CD4-positive, alpha-beta T cell (primary cell): ENCODE measurements at regions of chr15 and their contacts with region 1.

Region 1: GRCh38 chr15:64989416-64990167 is at the start of gene SPG21:
- DNase-seq: peak; percentile 71 to 96 (median 87)
- ATAC-seq: peak; percentile 88
- H3K4me3 ChIP-seq: peak within 1 kb of the TSS; percentile 97
- H3K4me3 Mint-ChIP-seq: peak within 1 kb of the TSS; percentile 91
- H3K27ac ChIP-seq: peak within 1 kb of the TSS; percentile 63 to 66
- H3K27ac Mint-ChIP-seq: peak within 1 kb of the TSS; percentile 87
- H3K4me1 ChIP-seq: peaks cover 29% of the 10 kb centered on the region
- H3K4me1 Mint-ChIP-seq: peaks cover 53% of the 10 kb centered on the region
- H3K27me3 ChIP-seq: no peaks in the 10 kb centered on the region
- H3K27me3 Mint-ChIP-seq: no peaks in the 10 kb centered on the region
- CTCF ChIP-seq: no peak
- total RNA-seq, gene SPG21: 29.4 to 32.7 TPM

Region 2: DNA sequence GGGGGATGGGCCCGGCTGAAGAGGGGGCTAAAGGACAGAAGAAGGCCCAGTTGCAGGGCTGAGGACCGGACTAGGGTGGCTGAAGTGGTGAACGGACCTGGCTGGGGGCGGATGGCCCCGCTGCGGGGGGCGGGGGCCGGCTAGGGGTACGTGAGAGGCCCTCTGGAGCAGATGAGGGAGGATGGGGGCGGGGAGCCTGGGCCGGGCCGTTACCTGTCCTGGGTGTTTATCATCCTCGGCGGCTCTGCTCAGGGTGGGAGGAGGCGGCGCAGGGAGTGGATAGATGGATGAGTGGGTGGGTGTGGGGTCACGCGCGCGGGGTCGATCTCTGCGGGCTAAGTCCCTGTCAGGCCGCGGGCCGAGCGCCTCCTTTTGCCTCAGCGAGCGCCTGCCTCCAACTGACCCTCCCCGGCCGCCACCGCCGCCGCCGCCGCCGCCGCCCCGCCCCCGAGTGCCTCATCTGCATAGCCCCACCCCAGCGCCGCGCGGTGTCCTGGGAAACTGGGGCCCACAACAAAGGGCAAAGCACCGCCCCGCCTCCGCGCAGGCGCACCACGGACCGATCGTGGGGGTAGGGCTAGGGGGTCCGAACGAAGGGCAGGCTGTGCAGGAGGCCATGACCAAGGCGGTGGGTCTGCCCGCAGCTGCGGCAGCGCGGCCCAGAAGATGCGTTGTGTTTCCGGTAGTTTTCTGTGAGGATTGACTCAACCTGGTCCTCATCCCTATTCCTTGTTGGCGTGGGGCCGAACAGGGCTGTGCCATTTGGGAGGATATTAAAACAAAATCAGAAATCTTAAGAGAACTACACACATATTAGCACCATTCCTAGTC is 286.6 kb before region 1 on chr15:
- CTCF ChIA-PET with region 1: no interaction called
- POLR2A ChIA-PET with region 1: no interaction called
- intact Hi-C with region 1: no loop called
- DNase-seq: peak; percentile 91 to 98 (median 94)
- ATAC-seq: peak; percentile 96
- H3K4me3 ChIP-seq: peak overlapping the region; percentile 91
- H3K4me3 Mint-ChIP-seq: peak overlapping the region; percentile 85
- H3K27ac ChIP-seq: peak overlapping the region; percentile 60 to 75
- H3K27ac Mint-ChIP-seq: peak overlapping the region; percentile 62
- H3K4me1 ChIP-seq: peaks cover 54% of the 10 kb centered on the region
- H3K4me1 Mint-ChIP-seq: peaks cover 58% of the 10 kb centered on the region
- H3K27me3 ChIP-seq: no peaks in the 10 kb centered on the region
- H3K27me3 Mint-ChIP-seq: no peaks in the 10 kb centered on the region
- CTCF ChIP-seq: no peak

Region 3: GRCh38 chr15:64930778-64931371 is 58.7 kb before region 1 on chr15:
- CTCF ChIA-PET with region 1: no interaction called
- POLR2A ChIA-PET with region 1: no interaction called
- intact Hi-C with region 1: no loop called
- DNase-seq: no peak
- ATAC-seq: no peak
- H3K4me3 ChIP-seq: no peak overlapping the region
- H3K4me3 Mint-ChIP-seq: no peak overlapping the region
- H3K27ac ChIP-seq: no peak overlapping the region
- H3K27ac Mint-ChIP-seq: no peak overlapping the region
- H3K4me1 ChIP-seq: no peaks in the 10 kb centered on the region
- H3K4me1 Mint-ChIP-seq: no peaks in the 10 kb centered on the region
- H3K27me3 ChIP-seq: no peaks in the 10 kb centered on the region
- H3K27me3 Mint-ChIP-seq: no peaks in the 10 kb centered on the region
- CTCF ChIP-seq: no peak

Region 4: GRCh38 chr15:64979252-64979710 is 10.3 kb before region 1 on chr15:
- CTCF ChIA-PET with region 1: no interaction called
- POLR2A ChIA-PET with region 1: no interaction called
- intact Hi-C with region 1: no loop called
- DNase-seq: no peak
- ATAC-seq: no peak
- H3K4me3 ChIP-seq: no peak overlapping the region
- H3K4me3 Mint-ChIP-seq: no peak overlapping the region
- H3K27ac ChIP-seq: no peak overlapping the region
- H3K27ac Mint-ChIP-seq: no peak overlapping the region
- H3K4me1 ChIP-seq: no peaks in the 10 kb centered on the region
- H3K4me1 Mint-ChIP-seq: peaks cover 6% of the 10 kb centered on the region
- H3K27me3 ChIP-seq: no peaks in the 10 kb centered on the region
- H3K27me3 Mint-ChIP-seq: no peaks in the 10 kb centered on the region
- CTCF ChIP-seq: no peak

Region 5: GRCh38 chr15:65133548-65134200 is 144.1 kb after region 1 on chr15 and contains the start of gene PDCD7:
- CTCF ChIA-PET with region 1: no interaction called
- POLR2A ChIA-PET with region 1: no interaction called
- intact Hi-C with region 1: loop called in 1 of 2 experiments (anchors 5 kb)
- DNase-seq: peak; percentile 68 to 95 (median 78)
- ATAC-seq: peak; percentile 95
- H3K4me3 ChIP-seq: peak within 1 kb of the TSS; percentile 66
- H3K4me3 Mint-ChIP-seq: peak within 1 kb of the TSS; percentile 95
- H3K27ac ChIP-seq: peak within 1 kb of the TSS; percentile 73 to 87
- H3K27ac Mint-ChIP-seq: peak within 1 kb of the TSS; percentile 92
- H3K4me1 ChIP-seq: peaks cover 26% of the 10 kb centered on the region
- H3K4me1 Mint-ChIP-seq: peaks cover 32% of the 10 kb centered on the region
- H3K27me3 ChIP-seq: no peaks in the 10 kb centered on the region
- H3K27me3 Mint-ChIP-seq: no peaks in the 10 kb centered on the region
- CTCF ChIP-seq: no peak
- total RNA-seq, gene PDCD7: 15.6 to 17.7 TPM

Region 6: DNA sequence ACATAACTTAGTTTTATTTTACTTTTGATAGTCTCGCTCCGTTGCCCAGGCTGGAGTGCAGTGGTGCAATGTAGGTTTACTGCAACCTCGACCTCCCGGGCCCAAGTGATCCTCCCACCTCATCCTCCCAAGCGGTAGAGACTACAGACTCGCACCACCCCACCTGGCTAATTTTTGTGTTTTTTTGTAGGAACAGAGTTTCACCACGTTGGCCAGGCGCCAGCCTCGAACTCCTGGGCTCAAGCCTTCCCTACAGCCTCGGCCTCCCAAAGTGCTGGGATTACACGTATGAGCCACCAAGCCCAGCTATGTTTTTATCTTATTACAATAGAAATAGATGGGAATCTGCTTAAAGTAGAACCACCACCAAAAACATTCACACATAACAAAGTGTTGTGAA is 309.1 kb after region 1 on chr15:
- CTCF ChIA-PET with region 1: no interaction called
- POLR2A ChIA-PET with region 1: interaction called, 3 read pairs
- intact Hi-C with region 1: loop called in 1 of 2 experiments (anchors 5 kb)
- DNase-seq: no peak
- ATAC-seq: no peak
- H3K4me3 ChIP-seq: peak overlapping the region; percentile 54
- H3K4me3 Mint-ChIP-seq: peak overlapping the region; percentile 92
- H3K27ac ChIP-seq: peak overlapping the region in 1 of 2 donors; percentile 43
- H3K27ac Mint-ChIP-seq: peak overlapping the region; percentile 91
- H3K4me1 ChIP-seq: peaks cover 39% of the 10 kb centered on the region
- H3K4me1 Mint-ChIP-seq: peaks cover 55% of the 10 kb centered on the region
- H3K27me3 ChIP-seq: no peaks in the 10 kb centered on the region
- H3K27me3 Mint-ChIP-seq: peaks cover 5% of the 10 kb centered on the region
- CTCF ChIP-seq: no peak

Region 7: DNA sequence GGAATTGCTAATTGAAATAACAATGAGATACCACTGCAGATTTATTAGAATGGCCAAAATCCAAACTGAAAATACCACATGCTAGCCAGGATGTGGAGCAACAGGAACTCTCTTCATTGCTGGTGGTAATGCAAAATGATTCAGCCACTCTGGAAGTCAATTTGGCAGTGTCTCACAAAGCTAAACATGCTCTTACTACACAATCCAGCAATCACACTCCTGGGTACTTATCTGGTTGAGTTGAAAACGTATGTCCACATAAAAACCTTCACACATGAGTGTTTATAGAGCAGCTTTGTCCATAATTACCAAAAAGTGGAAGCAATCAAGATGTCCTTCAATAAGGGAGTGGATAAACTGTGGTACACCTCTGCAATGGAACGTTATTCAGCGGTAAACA is 1825.7 kb after region 1 on chr15:
- CTCF ChIA-PET with region 1: no interaction called
- POLR2A ChIA-PET with region 1: no interaction called
- intact Hi-C with region 1: no loop called
- DNase-seq: no peak
- ATAC-seq: no peak
- H3K4me3 ChIP-seq: no peak overlapping the region
- H3K4me3 Mint-ChIP-seq: no peak overlapping the region
- H3K27ac ChIP-seq: no peak overlapping the region
- H3K27ac Mint-ChIP-seq: no peak overlapping the region
- H3K4me1 ChIP-seq: no peaks in the 10 kb centered on the region
- H3K4me1 Mint-ChIP-seq: no peaks in the 10 kb centered on the region
- H3K27me3 ChIP-seq: no peaks in the 10 kb centered on the region
- H3K27me3 Mint-ChIP-seq: peaks cover 9% of the 10 kb centered on the region
- CTCF ChIP-seq: no peak